GM12878 (cell line): ENCODE measurements at regions of chr17 and their contacts with region 1.

Region 1: GRCh38 chr17:48618256-48618897 is 3.3 kb upstream of the HOXB8 start:
- DNase-seq: no peak
- ATAC-seq: peak; percentile 88
- H3K4me3 ChIP-seq: no peak overlapping the region
- H3K27ac ChIP-seq: no peak overlapping the region
- H3K4me1 ChIP-seq: no peaks in the 10 kb centered on the region
- H3K27me3 ChIP-seq: peaks cover 36 to 46% of the 10 kb centered on the region in 2 experiments
- CTCF ChIP-seq: peak; percentile 94 to 97 (median 96)
- EP300 ChIP-seq: no peak
- POLR2A ChIP-seq: no peak
- RAD21 ChIP-seq: peak; percentile 85

Region 2: GRCh38 chr17:48601539-48602425 is 16.6 kb before region 1 on chr17:
- CTCF ChIA-PET with region 1: interaction called, 7 read pairs
- POLR2A ChIA-PET with region 1: interaction called, 11 read pairs
- RAD21 ChIA-PET with region 1: interaction called, 8 read pairs
- SMC1A ChIA-PET with region 1: interaction called, 8 read pairs
- in situ Hi-C with region 1: no loop called
- intact Hi-C with region 1: no loop called
- DNase-seq: no peak
- ATAC-seq: no peak
- H3K4me3 ChIP-seq: no peak overlapping the region
- H3K27ac ChIP-seq: no peak overlapping the region
- H3K4me1 ChIP-seq: peaks cover 6% of the 10 kb centered on the region; the same call in 1 of the 2 replicates
- H3K27me3 ChIP-seq: peaks cover 16 to 38% of the 10 kb centered on the region in 2 experiments
- CTCF ChIP-seq: no peak
- EP300 ChIP-seq: no peak
- POLR2A ChIP-seq: no peak
- RAD21 ChIP-seq: no peak